Activated CD8-positive, alpha-beta T cell treated with anti-CD3 and anti-CD28 coated beads for 36 hours (primary cell): ENCODE measurements at regions of chr16 and their contacts with region 1.

Region 1: DNA sequence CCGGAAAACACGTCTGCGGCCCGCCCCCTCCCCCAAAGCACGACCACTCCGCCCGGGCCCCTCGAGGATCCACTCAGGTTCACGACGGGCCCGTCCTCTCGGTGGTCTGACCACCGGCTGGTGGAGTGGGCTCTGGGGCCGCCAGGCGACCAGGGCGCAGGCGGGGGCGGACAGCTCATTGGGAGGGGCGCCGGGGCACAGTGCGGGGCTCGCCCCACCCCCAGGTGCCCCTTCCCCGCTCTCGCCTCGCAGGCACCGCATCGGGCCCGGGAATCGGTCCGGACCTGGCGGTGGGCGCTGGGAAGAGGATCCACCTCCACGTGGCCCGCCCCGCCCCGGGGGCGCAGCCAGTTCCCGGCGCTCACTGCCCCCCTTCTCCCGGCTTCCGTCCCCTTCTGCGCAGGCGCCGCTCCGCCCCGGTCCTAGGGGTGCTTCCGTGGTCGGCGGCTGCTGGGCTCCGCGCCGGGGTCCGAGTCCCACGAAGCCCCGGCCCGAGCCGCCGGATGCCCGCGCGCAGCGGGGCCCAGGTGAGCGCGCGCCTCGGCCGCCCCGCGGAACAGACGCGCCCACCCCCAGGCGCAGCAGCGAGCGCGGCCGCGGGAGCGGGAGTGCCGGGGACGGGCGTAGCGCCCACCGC is at the start of gene MPG:
- DNase-seq: peak; percentile 83
- ATAC-seq: peak; percentile 81
- H3K4me3 Mint-ChIP-seq: peak within 1 kb of the TSS; percentile 88
- H3K27ac Mint-ChIP-seq: peak within 1 kb of the TSS; percentile 87
- H3K4me1 Mint-ChIP-seq: peaks cover 33% of the 10 kb centered on the region
- H3K27me3 Mint-ChIP-seq: peaks cover 16% of the 10 kb centered on the region
- CTCF ChIP-seq: no peak
- total RNA-seq, gene MPG: 51.7 to 54.2 TPM

Region 2: GRCh38 chr16:53346-54236 is 24.3 kb before region 1 on chr16 and contains the starts of genes POLR3K and SNRNP25:
- CTCF ChIA-PET with region 1: interaction called, 3 read pairs
- POLR2A ChIA-PET with region 1: interaction called, 11 read pairs
- intact Hi-C with region 1: no loop called
- DNase-seq: peak; percentile 99
- ATAC-seq: peak; percentile 98
- H3K4me3 Mint-ChIP-seq: peak within 1 kb of the TSS; percentile 97
- H3K27ac Mint-ChIP-seq: peak within 1 kb of the TSS; percentile 97
- H3K4me1 Mint-ChIP-seq: peaks cover 26% of the 10 kb centered on the region
- H3K27me3 Mint-ChIP-seq: no peaks in the 10 kb centered on the region
- CTCF ChIP-seq: no peak
- total RNA-seq, gene POLR3K: 51.3 to 52.6 TPM
- total RNA-seq, gene SNRNP25: 39.4 to 39.7 TPM

Region 3: GRCh38 chr16:180938-181667 is 103.2 kb after region 1 on chr16:
- CTCF ChIA-PET with region 1: interaction called, 10 read pairs
- POLR2A ChIA-PET with region 1: interaction called, 4 read pairs
- intact Hi-C with region 1: no loop called
- DNase-seq: peak; percentile 91
- ATAC-seq: peak; percentile 88
- H3K4me3 Mint-ChIP-seq: peak overlapping the region; percentile 38
- H3K27ac Mint-ChIP-seq: no peak overlapping the region
- H3K4me1 Mint-ChIP-seq: peaks cover 4% of the 10 kb centered on the region
- H3K27me3 Mint-ChIP-seq: peaks cover 23% of the 10 kb centered on the region
- CTCF ChIP-seq: peak; percentile 98